ENCODE measurements at regions of chr10 and their contacts with region 1.

Region 1: GRCh38 chr10:89563861-89564478 is 28.6 kb upstream of the SLC16A12 start:
- DNase-seq: no peak
- ATAC-seq: peak; percentile 78 to 84
- H3K4me3 ChIP-seq: no peak overlapping the region
- H3K27ac ChIP-seq: no peak overlapping the region
- H3K4me1 ChIP-seq: no peaks in the 10 kb centered on the region
- H3K27me3 ChIP-seq: no peaks in the 10 kb centered on the region
- CTCF ChIP-seq: peak; percentile 65 to 83 (median 80)
- POLR2A ChIP-seq: no peak

Region 2: GRCh38 chr10:89001024-89001728 is 562.8 kb before region 1 on chr10:
- in situ Hi-C with region 1: loop called in 1 of 4 experiments (anchors 25 kb)
- intact Hi-C with region 1: no loop called
- DNase-seq: no peak
- ATAC-seq: peak in 1 of 2 donors; percentile 44
- H3K4me3 ChIP-seq: peak overlapping the region in 2 of 4 donors; percentile 23 to 26
- H3K27ac ChIP-seq: peak overlapping the region; percentile 14 to 54 (median 46)
- H3K4me1 ChIP-seq: no peaks in the 10 kb centered on the region
- H3K27me3 ChIP-seq: peaks cover 0 to 5% (median 4%) of the 10 kb centered on the region in 3 donors
- CTCF ChIP-seq: no peak
- POLR2A ChIP-seq: no peak

Region 3: DNA sequence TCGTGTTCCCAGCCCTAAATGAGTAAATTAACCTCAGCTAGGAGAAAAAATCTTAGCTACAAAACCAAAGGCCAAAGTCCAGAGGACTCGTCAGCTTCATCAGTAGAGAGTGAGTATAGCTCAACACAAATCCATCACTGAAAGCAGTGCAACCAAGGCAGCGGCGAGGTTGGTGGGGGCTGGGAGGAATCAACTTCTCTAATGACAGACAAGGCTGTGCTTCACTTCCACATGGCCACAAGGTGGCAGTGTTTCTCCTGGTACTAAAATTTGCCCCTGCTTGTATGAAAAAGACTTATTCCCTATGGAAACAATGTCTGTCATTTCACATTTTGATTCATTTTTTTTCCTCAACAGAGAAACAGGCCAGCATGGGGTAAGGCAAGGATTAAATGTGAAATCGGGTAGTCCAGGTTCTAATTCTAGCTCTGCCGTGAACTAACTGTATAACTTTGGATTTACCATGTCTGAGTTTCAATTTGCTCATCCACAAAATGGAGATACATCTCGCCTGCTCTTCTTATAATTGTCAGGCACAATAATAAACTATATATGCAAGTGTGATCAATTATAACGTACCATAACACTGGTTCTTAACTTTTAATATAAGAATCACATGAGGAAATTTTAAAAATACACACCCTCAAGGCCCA is 534.1 kb before region 1 on chr10:
- in situ Hi-C with region 1: loop called in 1 of 4 experiments (anchors 25 kb)
- intact Hi-C with region 1: no loop called
- DNase-seq: peak; percentile 38 to 45
- ATAC-seq: peak; percentile 57 to 66
- H3K4me3 ChIP-seq: no peak overlapping the region
- H3K27ac ChIP-seq: no peak overlapping the region
- H3K4me1 ChIP-seq: peaks cover 0 to 6% of the 10 kb centered on the region in 2 donors
- H3K27me3 ChIP-seq: no peaks in the 10 kb centered on the region
- CTCF ChIP-seq: peak; percentile 65 to 86 (median 84)
- POLR2A ChIP-seq: no peak

Region 4: GRCh38 chr10:89426230-89426868 is 137.6 kb before region 1 on chr10:
- in situ Hi-C with region 1: loop called (anchors 5 kb)
- intact Hi-C with region 1: loop called (anchors 1 kb)
- DNase-seq: no peak
- ATAC-seq: peak; percentile 83 to 87
- H3K4me3 ChIP-seq: no peak overlapping the region
- H3K27ac ChIP-seq: no peak overlapping the region
- H3K4me1 ChIP-seq: peaks cover 7 to 29% of the 10 kb centered on the region in 2 donors
- H3K27me3 ChIP-seq: no peaks in the 10 kb centered on the region
- CTCF ChIP-seq: peak; percentile 75 to 87 (median 83)
- POLR2A ChIP-seq: no peak

Region 5: GRCh38 chr10:89431977-89432376 is 132.0 kb before region 1 on chr10:
- in situ Hi-C with region 1: loop called (anchors 5 kb)
- intact Hi-C with region 1: no loop called
- DNase-seq: no peak
- ATAC-seq: no peak
- H3K4me3 ChIP-seq: no peak overlapping the region
- H3K27ac ChIP-seq: no peak overlapping the region
- H3K4me1 ChIP-seq: peaks cover 7 to 36% of the 10 kb centered on the region in 2 donors
- H3K27me3 ChIP-seq: no peaks in the 10 kb centered on the region
- CTCF ChIP-seq: no peak
- POLR2A ChIP-seq: no peak